Activated B cell treated with CpG ODN at 0.5 μM for 24 hours (primary cell): ENCODE measurements at regions of chr12 and their contacts with region 1.

Region 1: DNA sequence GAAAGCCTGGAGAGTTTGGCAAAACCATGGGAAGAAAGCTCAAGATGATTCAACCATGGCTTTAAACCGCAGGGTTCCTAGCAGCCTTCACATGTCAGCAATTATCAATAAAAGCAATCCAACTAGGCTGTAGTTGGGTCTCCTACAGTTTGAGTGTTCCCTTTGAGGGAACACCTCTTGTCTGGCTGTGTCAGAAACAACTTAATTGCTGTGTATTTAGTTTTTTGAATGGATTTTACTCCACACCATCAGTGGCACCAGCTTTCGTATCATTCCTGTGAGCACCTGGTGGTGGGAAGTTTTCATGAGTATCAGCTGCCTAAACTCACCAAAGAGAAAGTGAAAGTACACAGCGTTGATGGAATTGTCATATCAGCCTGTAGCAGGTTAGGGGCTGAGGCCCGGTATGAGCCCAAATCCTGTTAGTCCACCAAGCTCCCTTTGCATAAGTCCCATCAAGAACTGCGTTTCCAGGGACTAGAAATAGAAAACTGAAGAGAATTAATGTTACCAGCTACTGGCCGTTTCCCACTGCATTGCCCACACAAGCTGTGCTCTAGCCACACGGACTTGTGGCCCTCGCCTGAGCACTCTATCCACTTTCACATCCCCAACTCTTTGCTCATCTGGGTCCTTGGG is 10.9 kb upstream of the IL26 start:
- DNase-seq: peak; percentile 22
- ATAC-seq: peak; percentile 73
- H3K4me3 Mint-ChIP-seq: peak overlapping the region; percentile 88
- H3K27ac Mint-ChIP-seq: peak overlapping the region; percentile 92
- H3K4me1 Mint-ChIP-seq: peaks cover 32% of the 10 kb centered on the region
- H3K27me3 Mint-ChIP-seq: no peaks in the 10 kb centered on the region
- CTCF ChIP-seq: no peak

Region 2: GRCh38 chr12:68180792-68181744 is 55.5 kb before region 1 on chr12:
- CTCF ChIA-PET with region 1: no interaction called
- POLR2A ChIA-PET with region 1: no interaction called
- intact Hi-C with region 1: no loop called
- DNase-seq: no peak
- ATAC-seq: peak; percentile 86
- H3K4me3 Mint-ChIP-seq: no peak overlapping the region
- H3K27ac Mint-ChIP-seq: no peak overlapping the region
- H3K4me1 Mint-ChIP-seq: peaks cover 15% of the 10 kb centered on the region
- H3K27me3 Mint-ChIP-seq: peaks cover 3% of the 10 kb centered on the region
- CTCF ChIP-seq: no peak

Region 3: GRCh38 chr12:68223083-68223747 is 13.3 kb before region 1 on chr12:
- CTCF ChIA-PET with region 1: interaction called, 11 read pairs
- POLR2A ChIA-PET with region 1: no interaction called
- intact Hi-C with region 1: no loop called
- DNase-seq: peak; percentile 29
- ATAC-seq: peak; percentile 99
- H3K4me3 Mint-ChIP-seq: peak overlapping the region; percentile 48
- H3K27ac Mint-ChIP-seq: no peak overlapping the region
- H3K4me1 Mint-ChIP-seq: peaks cover 5% of the 10 kb centered on the region
- H3K27me3 Mint-ChIP-seq: peaks cover 3% of the 10 kb centered on the region
- CTCF ChIP-seq: no peak

Region 4: DNA sequence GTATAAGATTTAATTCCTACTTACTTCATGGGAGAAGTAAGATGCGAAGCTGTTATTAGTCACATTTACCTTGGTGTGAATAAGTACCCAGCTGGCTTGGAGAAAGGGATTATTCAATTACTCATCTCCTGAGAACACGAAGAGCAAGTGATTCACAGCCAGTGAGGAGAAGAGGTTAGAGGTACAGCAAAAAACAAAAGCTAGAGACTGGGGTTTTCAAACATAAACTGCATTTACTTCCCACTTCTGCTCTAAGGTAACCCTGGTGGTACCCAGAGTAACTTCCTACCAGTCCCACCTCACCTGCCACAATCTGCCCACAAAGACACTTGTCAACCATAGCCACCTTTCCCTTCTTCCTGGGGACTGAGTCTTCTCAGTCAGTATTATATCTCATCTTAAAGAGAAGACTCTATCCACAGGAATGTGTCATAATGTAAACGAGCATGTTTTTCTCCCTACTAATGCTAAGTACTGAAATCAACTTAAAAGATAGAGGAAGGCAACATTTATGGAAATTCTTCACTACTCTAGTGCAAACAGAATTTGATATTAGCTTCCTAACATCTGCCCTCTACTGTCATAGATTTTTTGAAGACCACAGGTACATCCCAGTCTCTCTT is 22.9 kb after region 1 on chr12:
- CTCF ChIA-PET with region 1: no interaction called
- POLR2A ChIA-PET with region 1: no interaction called
- intact Hi-C with region 1: no loop called
- DNase-seq: no peak
- ATAC-seq: no peak
- H3K4me3 Mint-ChIP-seq: no peak overlapping the region
- H3K27ac Mint-ChIP-seq: no peak overlapping the region
- H3K4me1 Mint-ChIP-seq: no peaks in the 10 kb centered on the region
- H3K27me3 Mint-ChIP-seq: peaks cover 16% of the 10 kb centered on the region
- CTCF ChIP-seq: no peak

Region 5: GRCh38 chr12:68331869-68332727 is 95.6 kb after region 1 on chr12 and contains the start of gene MDM1:
- CTCF ChIA-PET with region 1: no interaction called
- POLR2A ChIA-PET with region 1: no interaction called
- intact Hi-C with region 1: loop called (anchors 1 kb)
- DNase-seq: peak; percentile 92
- ATAC-seq: peak; percentile 97
- H3K4me3 Mint-ChIP-seq: peak within 1 kb of the TSS; percentile 89
- H3K27ac Mint-ChIP-seq: peak within 1 kb of the TSS; percentile 87
- H3K4me1 Mint-ChIP-seq: peaks cover 27% of the 10 kb centered on the region
- H3K27me3 Mint-ChIP-seq: no peaks in the 10 kb centered on the region
- CTCF ChIP-seq: no peak
- total RNA-seq, gene MDM1: 24.5 and 25.9 TPM in 2 replicates

Region 6: GRCh38 chr12:68451261-68452077 is 214.9 kb after region 1 on chr12:
- CTCF ChIA-PET with region 1: no interaction called
- POLR2A ChIA-PET with region 1: interaction called, 3 read pairs
- intact Hi-C with region 1: loop called (anchors 1 kb)
- DNase-seq: peak; percentile 22
- ATAC-seq: peak; percentile 78
- H3K4me3 Mint-ChIP-seq: peak overlapping the region; percentile 76
- H3K27ac Mint-ChIP-seq: peak overlapping the region; percentile 85
- H3K4me1 Mint-ChIP-seq: peaks cover 94% of the 10 kb centered on the region
- H3K27me3 Mint-ChIP-seq: no peaks in the 10 kb centered on the region
- CTCF ChIP-seq: no peak

Region 7: DNA sequence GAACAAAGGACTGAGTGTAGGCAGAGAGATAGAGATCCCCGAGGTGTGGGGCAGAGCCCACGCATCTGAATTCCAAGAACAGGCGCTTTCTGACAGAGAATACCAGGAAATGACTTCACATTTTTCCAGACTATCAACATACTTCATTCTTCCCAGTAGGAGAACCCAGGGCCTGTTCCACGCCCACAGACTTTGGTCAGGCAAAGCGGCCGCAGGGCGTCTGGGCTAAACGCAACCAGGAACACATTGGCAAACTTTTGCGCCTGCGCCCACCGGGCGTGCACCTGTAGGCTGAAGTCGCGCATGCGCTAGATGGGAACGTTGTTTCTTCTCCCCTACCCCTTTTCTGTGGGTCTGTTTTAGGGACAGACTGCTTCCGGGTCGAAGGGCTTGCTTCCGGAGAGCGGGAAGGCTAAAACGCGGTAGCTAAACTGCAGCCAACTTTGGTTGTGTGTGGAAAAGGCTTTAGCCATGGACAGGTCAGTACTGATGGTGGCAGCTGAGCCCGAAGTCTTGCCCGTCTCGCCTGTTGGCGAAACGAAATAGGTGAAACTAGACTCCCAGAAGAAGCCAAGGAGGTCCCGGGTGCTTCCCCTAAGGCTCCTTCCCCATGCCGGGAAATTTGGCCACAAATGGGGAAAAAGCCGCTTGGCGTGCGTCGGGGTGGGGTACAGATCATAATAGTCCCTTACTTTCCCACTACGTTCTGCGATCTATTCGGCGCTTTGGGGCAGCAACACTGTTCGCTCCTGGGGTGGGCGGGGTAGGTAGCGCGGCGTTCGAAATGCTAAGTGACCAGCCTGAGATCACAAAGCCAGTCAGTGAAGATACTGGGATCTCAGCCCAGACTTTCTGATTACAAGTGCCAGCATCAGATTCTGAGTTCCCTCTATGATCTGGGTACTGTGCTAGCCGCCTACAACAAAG is 450.3 kb after region 1 on chr12 and contains the start of gene NUP107:
- CTCF ChIA-PET with region 1: no interaction called
- POLR2A ChIA-PET with region 1: interaction called, 3 read pairs
- intact Hi-C with region 1: loop called (anchors 5 kb)
- DNase-seq: peak; percentile 93
- ATAC-seq: peak; percentile 97
- H3K4me3 Mint-ChIP-seq: peak within 1 kb of the TSS; percentile 98
- H3K27ac Mint-ChIP-seq: peak within 1 kb of the TSS; percentile 97
- H3K4me1 Mint-ChIP-seq: peaks cover 33% of the 10 kb centered on the region
- H3K27me3 Mint-ChIP-seq: no peaks in the 10 kb centered on the region
- CTCF ChIP-seq: no peak
- total RNA-seq, gene NUP107: 75.0 and 90.8 TPM in 2 replicates